Ascending aorta (tissue), 2 donors: ENCODE measurements at regions of chr7 and their contacts with region 1.

Region 1: DNA sequence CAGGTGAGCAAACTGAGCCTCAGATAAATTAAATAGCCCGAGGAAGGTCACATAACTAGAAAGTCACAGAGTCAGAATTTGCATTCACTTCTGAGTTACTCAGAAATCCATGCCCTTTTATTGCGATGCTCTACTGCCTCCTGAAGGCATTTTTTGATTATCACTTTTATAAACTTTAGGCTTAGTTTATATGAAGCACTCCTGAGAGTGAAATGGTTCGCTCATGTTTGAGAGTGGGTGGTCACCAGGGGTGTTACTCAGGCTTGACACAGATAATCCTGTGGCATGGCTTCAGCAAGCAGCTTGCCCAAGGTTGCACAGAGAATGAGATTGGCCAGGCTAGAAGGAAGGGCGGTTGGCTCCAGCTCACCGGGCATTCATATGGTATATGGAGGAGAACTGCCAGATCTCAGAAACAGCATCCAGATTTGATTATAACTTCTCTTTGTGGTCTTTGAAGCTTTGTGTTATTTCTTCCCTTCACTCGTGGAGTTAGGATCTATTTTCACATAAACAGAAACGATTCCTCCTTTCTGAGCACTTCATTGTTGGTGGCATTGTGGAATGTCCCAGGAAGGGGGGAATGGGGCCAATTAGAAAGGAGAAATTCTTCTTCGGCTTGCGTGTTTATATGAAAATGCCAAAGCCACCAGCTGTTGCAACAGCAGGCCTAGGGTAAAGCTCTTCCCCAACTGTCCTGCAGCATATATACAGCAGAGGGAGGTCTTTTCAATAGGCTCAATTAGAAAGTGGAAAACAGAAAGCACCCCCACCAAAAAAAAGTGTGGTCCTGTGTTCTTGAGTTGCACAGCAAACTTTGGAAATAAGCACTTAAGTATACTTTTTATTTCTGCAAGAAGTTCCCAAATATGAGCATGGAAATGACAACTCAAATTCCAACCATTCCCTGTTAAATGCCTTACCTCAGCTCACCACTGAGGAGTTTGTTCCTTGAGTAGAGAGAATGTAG is 628.8 kb downstream of the SUGCT start:
- DNase-seq: no peak
- H3K4me3 ChIP-seq: peak overlapping the region; percentile 2 to 44
- H3K27ac ChIP-seq: peak overlapping the region; percentile 57 to 58
- H3K4me1 ChIP-seq: peaks cover 0 to 15% of the 10 kb centered on the region in 2 donors
- H3K27me3 ChIP-seq: no peaks in the 10 kb centered on the region
- CTCF ChIP-seq: peak; percentile 9 to 37 (median 16)

Region 2: DNA sequence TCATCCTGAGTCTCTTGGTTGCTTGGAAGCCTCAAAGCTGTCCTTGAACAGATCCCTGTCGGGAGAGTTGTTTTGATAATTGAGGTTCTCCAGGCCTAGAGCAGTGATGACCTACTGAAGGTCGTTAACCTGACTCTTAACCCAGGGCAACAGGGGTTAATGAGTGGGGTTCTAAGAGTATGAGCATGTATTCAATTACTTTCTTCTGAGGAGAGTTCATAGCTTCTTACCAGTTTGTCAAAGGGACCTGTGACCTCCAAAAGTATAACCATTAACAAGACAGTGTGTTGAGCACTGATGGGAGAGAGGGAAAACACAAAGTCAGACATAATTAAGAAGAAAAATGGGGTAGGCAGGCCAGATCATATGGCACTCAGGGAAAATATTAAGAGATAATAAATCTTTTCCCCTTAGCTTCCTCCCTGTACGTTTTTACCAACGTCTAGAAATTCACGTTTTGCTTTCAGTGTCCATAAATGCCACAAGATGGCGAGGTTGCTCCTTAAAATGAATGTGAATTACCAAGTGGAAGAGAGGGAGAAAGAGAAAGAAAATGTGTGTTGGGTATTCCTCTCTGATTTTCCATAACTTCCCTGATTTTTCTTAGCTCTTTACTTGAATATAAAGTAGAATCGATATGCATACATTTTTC is 531.2 kb before region 1 on chr7:
- intact Hi-C with region 1: loop called (anchors 5 kb)
- DNase-seq: peak in 1 of 2 donors; percentile 46
- H3K4me3 ChIP-seq: no peak overlapping the region
- H3K27ac ChIP-seq: no peak overlapping the region
- H3K4me1 ChIP-seq: no peaks in the 10 kb centered on the region
- H3K27me3 ChIP-seq: no peaks in the 10 kb centered on the region
- CTCF ChIP-seq: peak; percentile 51 to 67 (median 54)

Region 3: GRCh38 chr7:40329601-40330153 is 433.9 kb before region 1 on chr7:
- intact Hi-C with region 1: loop called (anchors 1 kb)
- DNase-seq: no peak
- H3K4me3 ChIP-seq: no peak overlapping the region
- H3K27ac ChIP-seq: peak overlapping the region; percentile 2 to 43
- H3K4me1 ChIP-seq: peaks cover 0 to 5% of the 10 kb centered on the region in 2 donors
- H3K27me3 ChIP-seq: no peaks in the 10 kb centered on the region
- CTCF ChIP-seq: peak; percentile 69 to 83 (median 71)

Region 4: GRCh38 chr7:40604601-40605438 is 158.8 kb before region 1 on chr7:
- intact Hi-C with region 1: loop called (anchors 5 kb)
- DNase-seq: peak in 1 of 2 donors; percentile 74
- H3K4me3 ChIP-seq: peak overlapping the region; percentile 3 to 5
- H3K27ac ChIP-seq: no peak overlapping the region
- H3K4me1 ChIP-seq: peaks cover 0 to 8% of the 10 kb centered on the region in 2 donors
- H3K27me3 ChIP-seq: no peaks in the 10 kb centered on the region
- CTCF ChIP-seq: peak; percentile 54 to 72 (median 61)

Region 5: DNA sequence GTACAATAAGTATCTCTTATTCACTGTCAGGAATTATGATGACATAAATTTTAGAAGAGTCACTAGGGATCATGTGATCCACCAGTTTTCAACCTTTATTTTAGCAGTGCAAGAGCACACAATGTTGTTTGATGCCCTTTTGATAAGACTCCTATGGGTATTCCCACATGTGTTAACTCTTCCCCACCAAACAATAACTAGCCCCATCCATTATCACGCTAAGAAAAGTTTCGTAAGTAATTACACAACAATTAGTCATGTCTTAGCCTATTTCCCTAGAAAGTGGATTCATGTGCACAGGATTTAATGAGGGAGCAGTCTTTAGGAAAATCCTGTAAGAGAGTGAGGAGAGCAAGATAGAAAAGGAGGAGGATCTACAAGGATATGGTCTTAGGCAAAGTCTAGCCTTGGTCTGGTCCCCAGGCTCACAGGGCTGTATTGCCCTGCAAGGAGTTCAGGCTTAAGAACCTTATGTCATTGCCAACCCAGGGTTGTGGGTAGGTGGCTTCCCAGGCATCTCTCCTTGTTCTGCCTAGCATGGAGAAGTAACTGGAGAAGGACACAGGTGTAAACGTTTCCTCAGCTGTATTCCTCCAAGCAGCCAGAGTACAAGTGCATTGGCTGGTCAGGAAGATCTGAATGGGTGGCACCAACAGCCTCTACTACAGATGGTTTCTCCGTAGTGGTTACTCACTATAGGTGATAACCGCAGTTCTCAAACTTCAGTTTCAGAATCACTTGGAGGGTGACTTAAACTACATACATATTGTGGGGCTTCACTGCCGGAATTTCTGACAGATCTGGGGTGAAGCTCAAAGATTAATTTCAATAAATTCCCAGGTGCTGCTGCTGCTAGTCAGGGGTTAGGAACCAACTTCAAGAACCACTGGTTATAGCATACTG is 54.3 kb before region 1 on chr7:
- intact Hi-C with region 1: no loop called
- DNase-seq: no peak
- H3K4me3 ChIP-seq: no peak overlapping the region
- H3K27ac ChIP-seq: no peak overlapping the region
- H3K4me1 ChIP-seq: peaks cover 2 to 12% of the 10 kb centered on the region in 2 donors
- H3K27me3 ChIP-seq: no peaks in the 10 kb centered on the region
- CTCF ChIP-seq: no peak

Region 6: DNA sequence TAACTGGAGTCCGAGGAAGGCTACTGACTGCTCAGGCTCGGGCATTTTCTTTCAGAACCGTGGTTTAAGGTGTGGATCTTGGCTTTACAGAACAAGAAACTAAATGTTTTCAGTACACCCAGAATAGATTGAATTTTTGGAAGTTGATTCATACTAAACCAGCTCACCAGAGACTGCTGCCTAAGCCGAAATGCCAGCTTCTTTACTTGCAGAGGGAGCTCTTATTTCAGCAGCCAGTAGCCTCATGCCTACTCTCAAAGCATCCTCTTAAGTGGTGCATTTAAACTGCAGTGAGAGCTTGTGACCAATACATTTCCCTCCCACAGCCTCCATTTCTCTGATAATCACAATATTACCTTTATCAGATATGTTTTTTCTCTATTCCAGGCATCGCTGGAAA is 13.7 kb before region 1 on chr7:
- intact Hi-C with region 1: no loop called
- DNase-seq: peak in 1 of 2 donors; percentile 76
- H3K4me3 ChIP-seq: peak overlapping the region in 1 of 2 donors; percentile 19
- H3K27ac ChIP-seq: peak overlapping the region; percentile 63 to 72
- H3K4me1 ChIP-seq: peaks cover 4 to 23% of the 10 kb centered on the region in 2 donors
- H3K27me3 ChIP-seq: no peaks in the 10 kb centered on the region
- CTCF ChIP-seq: no peak

Region 7: GRCh38 chr7:40793132-40793531 is 29.5 kb after region 1 on chr7:
- intact Hi-C with region 1: no loop called
- DNase-seq: no peak
- H3K4me3 ChIP-seq: no peak overlapping the region
- H3K27ac ChIP-seq: no peak overlapping the region
- H3K4me1 ChIP-seq: peaks cover 0 to 8% of the 10 kb centered on the region in 2 donors
- H3K27me3 ChIP-seq: no peaks in the 10 kb centered on the region
- CTCF ChIP-seq: no peak